Ascending aorta (tissue), 2 donors: ENCODE measurements at regions of chr5 and their contacts with region 1.

Region 1: GRCh38 chr5:179907570-179908324 is at the start of gene TBC1D9B:
- DNase-seq: peak in 1 of 2 donors; percentile 81
- H3K4me3 ChIP-seq: peak within 1 kb of the TSS; percentile 82 to 85
- H3K27ac ChIP-seq: peak within 1 kb of the TSS; percentile 76
- H3K4me1 ChIP-seq: peaks cover 6 to 16% of the 10 kb centered on the region in 2 donors
- H3K27me3 ChIP-seq: no peaks in the 10 kb centered on the region
- CTCF ChIP-seq: peak in 2 of 3 experiments; percentile 27 to 68
- total RNA-seq, gene TBC1D9B: 220 TPM

Region 2: DNA sequence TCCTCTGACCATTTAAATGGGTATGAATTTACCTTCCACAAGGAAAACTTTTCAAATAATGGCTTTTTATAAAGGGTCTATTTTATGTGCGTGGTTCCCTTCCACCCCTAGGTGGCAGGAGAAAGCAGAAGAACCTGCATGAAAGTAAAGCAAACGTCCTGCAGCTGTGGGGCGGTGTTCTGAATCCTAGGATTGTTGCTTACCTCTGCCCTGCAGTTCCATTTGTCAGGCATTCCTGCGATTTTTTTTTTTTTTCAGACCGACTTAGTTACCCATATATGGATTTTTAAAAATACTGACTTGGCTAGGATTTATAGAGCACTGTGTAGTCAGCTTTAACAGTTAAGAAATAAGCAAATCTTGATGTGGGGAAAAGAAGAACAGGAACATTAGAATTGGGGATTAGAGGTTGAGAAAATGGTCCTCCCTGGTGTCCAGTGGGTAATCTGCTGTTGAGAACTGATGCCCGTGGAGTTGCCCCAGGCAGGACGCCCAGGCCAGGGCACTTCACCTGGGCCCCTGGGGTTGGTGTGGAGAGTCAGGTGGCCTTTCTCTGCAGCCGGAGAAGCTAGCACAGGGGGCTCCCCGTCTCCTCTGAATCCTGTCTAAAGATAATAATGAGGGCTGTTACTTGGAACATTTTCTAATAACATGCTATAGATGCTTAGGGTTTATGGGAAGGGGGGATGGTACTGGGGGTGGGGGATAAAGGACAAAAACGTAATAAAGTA is 144.4 kb before region 1 on chr5:
- intact Hi-C with region 1: loop called (anchors 2 kb)
- DNase-seq: peak in 1 of 2 donors; percentile 90
- H3K4me3 ChIP-seq: peak overlapping the region in 1 of 2 donors; percentile 16
- H3K27ac ChIP-seq: peak overlapping the region; percentile 74 to 91
- H3K4me1 ChIP-seq: peaks cover 22 to 52% of the 10 kb centered on the region in 2 donors
- H3K27me3 ChIP-seq: no peaks in the 10 kb centered on the region
- CTCF ChIP-seq: peak; percentile 76 to 91 (median 89)

Region 3: GRCh38 chr5:179806250-179807222 is 101.2 kb before region 1 on chr5 and contains the start of gene MGAT4B:
- intact Hi-C with region 1: loop called (anchors 2 kb)
- DNase-seq: peak in 1 of 2 donors; percentile 84
- H3K4me3 ChIP-seq: peak within 1 kb of the TSS; percentile 78 to 87
- H3K27ac ChIP-seq: peak within 1 kb of the TSS; percentile 91
- H3K4me1 ChIP-seq: peaks cover 10 to 21% of the 10 kb centered on the region in 2 donors
- H3K27me3 ChIP-seq: no peaks in the 10 kb centered on the region
- CTCF ChIP-seq: no peak
- total RNA-seq, gene MGAT4B: 207 TPM

Region 4: DNA sequence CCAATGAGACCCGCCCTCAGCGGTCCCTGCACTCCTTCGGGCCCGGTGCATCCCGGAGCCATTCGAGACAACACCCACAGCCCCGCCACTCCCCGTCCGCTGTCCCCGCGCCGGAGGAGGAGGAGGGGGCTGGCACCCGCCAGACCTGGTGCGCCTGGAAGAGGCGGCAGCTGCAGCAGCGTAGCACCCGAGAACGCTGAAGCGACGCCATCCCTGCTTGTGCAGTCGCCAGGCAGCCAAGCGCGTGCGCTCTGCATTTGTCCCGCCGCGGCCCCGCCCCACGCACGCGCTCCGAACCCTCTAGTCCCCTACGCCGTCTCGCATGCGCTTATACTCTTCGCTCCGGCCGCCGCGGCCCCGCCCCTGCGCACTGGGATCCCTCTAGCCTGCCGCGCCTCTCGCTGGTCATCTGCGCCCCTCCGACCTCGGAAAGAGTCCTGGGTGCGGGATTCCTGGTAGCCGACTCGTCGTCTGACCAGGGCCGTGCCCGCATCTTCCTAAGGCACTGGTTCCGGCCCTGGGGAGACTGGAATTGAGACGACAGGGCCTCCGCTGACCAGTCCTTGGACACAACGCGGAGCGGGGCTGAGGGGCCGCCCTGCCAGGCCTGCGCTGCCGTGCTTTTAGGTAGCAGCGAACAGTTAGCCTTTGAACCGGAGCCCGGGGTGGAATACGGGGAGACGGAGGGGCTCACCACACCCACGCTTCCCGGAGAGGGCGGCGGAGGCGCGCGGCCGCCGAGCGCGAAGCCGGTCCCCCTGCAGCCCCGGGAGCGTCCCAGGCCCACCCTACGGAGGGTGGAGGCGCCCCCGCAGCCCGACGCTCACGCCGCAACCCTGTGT is 48.9 kb before region 1 on chr5 and contains the start of gene MRNIP:
- intact Hi-C with region 1: loop called (anchors 2 kb)
- DNase-seq: peak; percentile 83 to 98
- H3K4me3 ChIP-seq: peak within 1 kb of the TSS; percentile 79 to 93
- H3K27ac ChIP-seq: peak within 1 kb of the TSS; percentile 78 to 86
- H3K4me1 ChIP-seq: peaks cover 0 to 8% of the 10 kb centered on the region in 2 donors
- H3K27me3 ChIP-seq: no peaks in the 10 kb centered on the region
- CTCF ChIP-seq: peak in 1 of 3 experiments; percentile 33
- total RNA-seq, gene MRNIP: 17.3 TPM

Region 5: DNA sequence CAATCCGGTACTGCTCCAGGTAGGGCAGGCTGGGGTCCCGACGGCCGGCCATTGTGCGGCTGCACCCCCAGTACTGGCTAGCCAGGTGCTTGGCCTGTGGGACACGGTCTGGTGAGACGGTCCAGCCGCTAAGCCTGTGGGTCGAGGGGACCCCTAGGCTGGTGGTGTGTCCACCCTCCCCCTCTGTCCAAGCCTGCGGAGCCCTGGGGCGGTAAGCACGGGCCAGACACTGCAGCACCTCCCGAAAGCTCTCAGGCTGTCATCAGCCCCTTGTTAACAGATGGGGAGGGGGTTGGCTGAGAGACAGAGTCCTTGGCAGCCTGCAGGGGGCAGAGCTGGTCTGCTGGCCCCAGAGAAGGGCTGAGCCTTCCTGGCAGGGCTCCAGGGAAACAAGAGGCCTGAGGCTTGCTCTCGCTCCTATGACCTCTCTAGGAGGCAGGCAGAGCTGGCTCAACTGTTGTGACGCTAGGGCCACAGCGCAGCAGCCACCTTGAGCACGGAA is 37.3 kb before region 1 on chr5:
- intact Hi-C with region 1: no loop called
- DNase-seq: no peak
- H3K4me3 ChIP-seq: no peak overlapping the region
- H3K27ac ChIP-seq: no peak overlapping the region
- H3K4me1 ChIP-seq: no peaks in the 10 kb centered on the region
- H3K27me3 ChIP-seq: no peaks in the 10 kb centered on the region
- CTCF ChIP-seq: no peak

Region 6: DNA sequence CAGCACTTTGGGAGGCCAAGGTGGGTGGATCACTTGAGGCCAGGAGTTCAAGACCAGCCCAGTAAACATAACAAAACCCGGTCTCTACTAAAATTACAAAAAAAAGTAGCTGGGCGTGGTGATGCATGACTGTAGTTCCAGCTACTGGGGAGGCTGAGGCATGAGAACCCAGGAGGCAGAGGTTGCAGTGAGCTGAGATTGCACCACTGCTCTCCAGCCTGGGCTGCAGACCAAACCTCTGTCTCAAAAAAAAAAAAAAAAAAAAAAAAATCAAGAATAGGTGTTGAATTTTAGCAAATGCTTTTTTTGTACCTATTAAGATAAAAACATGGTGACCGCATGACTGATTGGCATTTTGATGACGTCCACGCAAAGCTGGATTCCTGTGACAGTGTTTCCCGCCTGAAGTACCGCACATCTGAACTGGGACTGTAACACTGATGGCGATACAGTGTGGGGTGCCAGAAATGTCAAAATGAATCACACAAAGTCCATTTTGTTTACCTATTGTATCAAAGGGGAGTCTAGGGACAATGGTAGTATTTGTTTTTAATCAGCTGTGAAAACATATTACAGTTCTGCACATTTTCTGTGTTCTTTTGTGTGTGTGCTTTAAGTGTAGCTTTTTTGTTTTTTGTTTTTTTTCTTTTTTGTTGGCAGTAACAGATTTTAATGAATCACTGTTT is 23.2 kb after region 1 on chr5:
- intact Hi-C with region 1: no loop called
- DNase-seq: no peak
- H3K4me3 ChIP-seq: no peak overlapping the region
- H3K27ac ChIP-seq: no peak overlapping the region
- H3K4me1 ChIP-seq: no peaks in the 10 kb centered on the region
- H3K27me3 ChIP-seq: no peaks in the 10 kb centered on the region
- CTCF ChIP-seq: no peak

Region 7: DNA sequence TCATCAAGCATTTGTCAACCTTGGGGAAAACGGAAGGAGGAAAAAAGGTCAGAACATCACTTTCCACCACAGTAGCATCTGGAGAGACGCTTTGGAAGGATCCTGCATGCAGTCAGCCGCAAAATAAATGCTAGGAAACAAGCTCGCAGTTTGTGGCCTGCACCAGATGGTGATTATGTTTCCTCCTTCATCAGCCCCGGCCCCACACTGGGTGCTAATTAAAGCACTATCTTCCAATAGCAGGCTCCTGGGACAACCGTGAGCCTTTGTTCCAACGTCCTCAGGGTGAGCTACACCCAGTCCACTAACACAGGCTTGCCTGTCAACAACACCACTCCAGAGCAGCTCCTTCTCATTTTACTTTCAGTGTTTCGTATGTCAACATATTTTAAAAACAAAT is 99.8 kb after region 1 on chr5:
- intact Hi-C with region 1: no loop called
- DNase-seq: no peak
- H3K4me3 ChIP-seq: no peak overlapping the region
- H3K27ac ChIP-seq: no peak overlapping the region
- H3K4me1 ChIP-seq: no peaks in the 10 kb centered on the region
- H3K27me3 ChIP-seq: no peaks in the 10 kb centered on the region
- CTCF ChIP-seq: no peak

Region 8: GRCh38 chr5:180071531-180072255 is 163.9 kb after region 1 on chr5 and contains the start of gene RNF130:
- intact Hi-C with region 1: loop called (anchors 5 kb)
- DNase-seq: peak; percentile 72 to 95
- H3K4me3 ChIP-seq: peak within 1 kb of the TSS; percentile 74 to 94
- H3K27ac ChIP-seq: peak within 1 kb of the TSS; percentile 94 to 98
- H3K4me1 ChIP-seq: peaks cover 0 to 10% of the 10 kb centered on the region in 2 donors
- H3K27me3 ChIP-seq: no peaks in the 10 kb centered on the region
- CTCF ChIP-seq: no peak
- total RNA-seq, gene RNF130: 86.7 TPM

Region 9: DNA sequence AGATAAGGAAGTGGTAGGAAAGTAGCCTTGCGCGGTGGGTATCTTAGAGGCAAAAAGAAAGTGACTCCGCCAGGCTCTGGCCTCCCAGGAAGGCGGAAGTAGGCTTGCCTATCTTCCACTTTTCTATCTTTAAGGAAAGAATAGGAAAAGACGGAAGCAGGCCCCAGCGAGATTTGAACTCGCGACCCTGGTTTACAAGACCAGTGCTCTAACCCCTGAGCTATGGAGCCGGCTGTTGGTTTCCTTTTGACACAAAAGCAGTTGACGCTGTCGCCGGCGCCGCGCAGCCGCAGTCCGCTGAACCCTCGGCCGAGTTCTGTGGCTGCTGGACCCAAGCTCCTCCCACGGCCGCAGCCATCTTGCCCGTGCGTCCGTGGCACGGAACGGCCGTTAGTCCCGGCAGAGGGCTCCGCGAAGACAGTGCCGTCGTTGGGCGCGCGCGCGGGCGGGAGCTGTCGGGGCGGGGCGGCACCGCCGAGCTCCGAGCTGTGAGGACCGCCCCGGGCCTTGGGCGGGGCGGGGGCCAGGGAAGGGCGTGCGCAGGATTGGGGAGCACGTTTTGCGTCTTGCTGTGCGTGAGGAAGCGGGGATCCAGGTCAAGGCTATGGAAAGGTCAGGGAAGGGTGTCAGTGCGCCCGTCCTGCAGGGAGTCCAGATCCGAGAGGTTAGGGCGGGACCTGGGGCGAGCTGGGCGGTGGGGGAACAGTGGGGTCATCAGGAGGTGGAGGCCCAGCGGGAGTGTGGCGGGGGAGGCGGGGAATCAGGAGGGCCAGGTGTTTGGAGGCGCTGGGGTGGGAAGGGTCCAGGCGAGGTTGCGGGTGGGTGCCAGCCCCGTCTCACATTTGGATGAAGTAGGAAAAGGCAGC is 1284.0 kb after region 1 on chr5:
- intact Hi-C with region 1: no loop called
- DNase-seq: peak; percentile 86 to 98
- H3K4me3 ChIP-seq: peak overlapping the region; percentile 61 to 84
- H3K27ac ChIP-seq: peak overlapping the region; percentile 82 to 88
- H3K4me1 ChIP-seq: peaks cover 3 to 10% of the 10 kb centered on the region in 2 donors
- H3K27me3 ChIP-seq: no peaks in the 10 kb centered on the region
- CTCF ChIP-seq: no peak